ENCODE measurements at regions of chr12 and their contacts with region 1.

Region 1: DNA sequence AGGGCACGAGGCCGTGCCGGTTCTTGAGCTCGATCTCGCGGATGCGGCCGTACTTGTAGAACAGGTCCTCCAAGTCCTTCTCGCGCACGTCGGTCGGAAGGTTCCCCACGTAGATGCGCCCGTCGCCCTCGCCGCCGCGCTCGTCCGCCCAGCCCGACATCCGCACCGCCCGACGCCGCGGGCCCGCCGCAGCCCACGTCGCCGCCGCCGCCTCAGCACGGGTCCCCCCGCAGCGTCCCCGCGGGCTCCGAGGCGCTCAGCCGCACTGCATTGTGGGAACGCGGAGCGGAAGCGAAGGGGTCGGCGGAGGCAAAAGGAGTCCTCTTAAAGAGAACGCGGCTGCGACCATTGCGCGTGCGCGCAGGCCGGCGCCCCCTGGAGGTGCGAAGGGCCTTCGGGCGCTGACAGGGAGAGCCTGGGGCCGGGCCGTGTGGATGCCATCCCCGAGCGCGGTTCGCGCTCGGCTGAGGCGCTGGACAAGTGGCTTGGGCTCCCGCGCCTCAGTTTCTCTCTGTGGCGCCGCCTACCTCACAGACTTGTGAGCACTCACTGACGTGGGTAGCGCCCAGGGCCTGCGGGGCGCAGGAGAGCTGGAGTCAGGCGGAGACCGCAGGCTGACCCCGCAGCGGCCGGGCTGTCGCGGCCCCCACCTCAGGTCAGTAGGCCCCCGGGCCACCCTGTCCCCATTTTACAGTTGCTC is at the start of gene SRSF9:
- DNase-seq: peak; percentile 96
- H3K4me3 Mint-ChIP-seq: peak within 1 kb of the TSS; percentile 95
- H3K27ac Mint-ChIP-seq: peak within 1 kb of the TSS; percentile 81
- H3K4me1 Mint-ChIP-seq: peaks cover 40% of the 10 kb centered on the region
- H3K27me3 Mint-ChIP-seq: peaks cover 2% of the 10 kb centered on the region
- total RNA-seq, gene SRSF9: 248 and 251 TPM in 2 replicates

Region 2: DNA sequence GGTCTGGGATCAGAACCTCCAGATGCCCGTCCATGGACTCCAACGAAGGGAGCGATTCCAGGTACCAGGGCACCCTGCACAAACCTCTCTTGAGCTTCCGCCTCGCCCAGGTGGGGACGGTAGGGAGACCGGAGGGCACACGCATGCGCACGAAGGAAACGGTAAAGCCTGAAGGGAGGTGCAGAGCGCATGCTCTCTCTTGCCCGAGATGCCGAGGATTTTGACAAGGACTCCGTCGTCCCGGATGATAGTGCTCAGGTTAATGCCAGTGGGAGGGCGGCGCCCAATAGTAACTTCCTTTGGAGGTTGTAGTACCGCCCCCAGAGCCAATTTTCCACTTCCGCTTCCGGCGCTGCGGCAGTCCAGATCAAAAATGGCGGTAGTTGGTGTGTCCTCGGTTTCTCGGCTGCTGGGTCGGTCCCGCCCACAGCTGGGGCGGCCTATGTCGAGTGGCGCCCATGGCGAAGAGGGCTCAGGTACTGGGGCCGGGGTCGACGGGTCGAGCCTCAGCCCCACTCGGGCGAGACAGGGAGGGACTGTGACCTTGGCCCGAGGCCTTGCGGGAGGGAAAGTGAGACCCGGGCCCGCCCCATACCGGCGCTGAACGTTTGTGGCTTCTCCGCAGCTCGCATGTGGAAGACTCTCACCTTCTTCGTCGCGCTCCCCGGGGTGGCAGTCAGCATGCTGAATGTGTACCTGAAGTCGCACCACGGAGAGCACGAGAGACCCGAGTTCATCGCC is 31.7 kb before region 1 on chr12 and contains the start of gene COX6A1:
- intact Hi-C with region 1: loop called (anchors 1 kb)
- DNase-seq: peak; percentile 98
- H3K4me3 Mint-ChIP-seq: peak within 1 kb of the TSS; percentile 98
- H3K27ac Mint-ChIP-seq: peak within 1 kb of the TSS; percentile 94
- H3K4me1 Mint-ChIP-seq: peaks cover 17% of the 10 kb centered on the region
- H3K27me3 Mint-ChIP-seq: no peaks in the 10 kb centered on the region
- total RNA-seq, gene COX6A1: 328 and 333 TPM in 2 replicates

Region 3: DNA sequence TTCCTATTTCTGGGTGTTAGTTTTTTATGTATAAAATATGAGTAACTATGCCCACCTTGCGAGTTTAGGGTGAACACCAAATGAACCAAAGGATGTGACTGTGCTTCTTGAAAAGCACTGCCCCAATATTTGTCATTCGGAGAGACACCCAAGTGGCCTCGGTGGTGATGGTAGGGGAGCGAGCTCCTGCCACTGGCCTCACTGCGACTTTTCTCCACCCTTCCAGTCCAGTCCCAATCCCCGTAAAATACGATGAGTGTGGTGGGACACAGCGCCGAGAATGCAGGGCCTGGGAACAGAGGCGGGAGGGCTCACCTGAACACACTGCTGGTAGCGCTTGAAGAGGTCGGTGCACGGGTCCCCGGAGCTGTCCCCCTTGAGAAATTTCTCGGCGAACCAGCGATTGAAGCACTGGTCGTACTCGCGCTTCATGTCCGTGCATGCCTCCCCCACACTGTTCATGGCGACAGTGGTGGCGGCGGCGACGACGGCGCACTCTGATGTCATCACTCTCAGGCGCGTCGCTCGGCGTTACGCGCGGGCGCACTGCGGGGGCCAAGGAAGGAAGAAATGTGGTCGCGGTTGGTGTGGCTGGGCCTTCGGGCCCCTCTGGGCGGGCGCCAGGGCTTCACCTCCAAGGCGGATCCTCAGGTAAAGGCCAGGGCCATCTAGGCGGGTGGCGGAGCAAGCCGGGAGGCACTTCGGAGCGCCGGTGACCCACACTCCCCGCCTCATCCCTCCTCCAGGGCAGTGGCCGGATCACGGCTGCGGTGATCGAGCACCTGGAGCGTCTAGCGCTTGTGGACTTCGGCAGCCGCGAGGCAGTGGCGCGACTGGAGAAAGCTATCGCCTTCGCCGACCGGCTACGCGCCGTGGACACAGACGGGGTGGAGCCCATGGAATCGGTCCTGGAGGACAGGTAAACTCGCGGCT is 23.4 kb before region 1 on chr12 and contains the starts of genes GATC and TRIAP1:
- intact Hi-C with region 1: loop called (anchors 1 kb)
- DNase-seq: peak; percentile 87
- H3K4me3 Mint-ChIP-seq: peak within 1 kb of the TSS; percentile 98
- H3K27ac Mint-ChIP-seq: peak within 1 kb of the TSS; percentile 98
- H3K4me1 Mint-ChIP-seq: peaks cover 17% of the 10 kb centered on the region
- H3K27me3 Mint-ChIP-seq: peaks cover 1% of the 10 kb centered on the region
- total RNA-seq, gene GATC: 30.4 and 38.0 TPM in 2 replicates
- total RNA-seq, gene TRIAP1: 36.8 TPM in 2 replicates

Region 4: GRCh38 chr12:120495723-120496412 is 26.3 kb after region 1 on chr12 and contains the start of gene DYNLL1:
- intact Hi-C with region 1: loop called (anchors 1 kb)
- DNase-seq: peak; percentile 96
- H3K4me3 Mint-ChIP-seq: peak within 1 kb of the TSS; percentile 98
- H3K27ac Mint-ChIP-seq: peak within 1 kb of the TSS; percentile 87
- H3K4me1 Mint-ChIP-seq: peaks cover 31% of the 10 kb centered on the region
- H3K27me3 Mint-ChIP-seq: no peaks in the 10 kb centered on the region
- total RNA-seq, gene DYNLL1: 323 and 329 TPM in 2 replicates

Region 5: GRCh38 chr12:120528861-120529525 is 59.4 kb after region 1 on chr12 and contains the start of gene COQ5:
- intact Hi-C with region 1: loop called (anchors 2 kb)
- DNase-seq: peak; percentile 76
- H3K4me3 Mint-ChIP-seq: peak within 1 kb of the TSS; percentile 99
- H3K27ac Mint-ChIP-seq: peak within 1 kb of the TSS; percentile 99
- H3K4me1 Mint-ChIP-seq: peaks cover 15% of the 10 kb centered on the region
- H3K27me3 Mint-ChIP-seq: no peaks in the 10 kb centered on the region
- total RNA-seq, gene COQ5: 29.3 and 29.9 TPM in 2 replicates